Endothelial cell of umbilical vein (primary cell): ENCODE measurements at regions of chr5 and their contacts with region 1.

Region 1: DNA sequence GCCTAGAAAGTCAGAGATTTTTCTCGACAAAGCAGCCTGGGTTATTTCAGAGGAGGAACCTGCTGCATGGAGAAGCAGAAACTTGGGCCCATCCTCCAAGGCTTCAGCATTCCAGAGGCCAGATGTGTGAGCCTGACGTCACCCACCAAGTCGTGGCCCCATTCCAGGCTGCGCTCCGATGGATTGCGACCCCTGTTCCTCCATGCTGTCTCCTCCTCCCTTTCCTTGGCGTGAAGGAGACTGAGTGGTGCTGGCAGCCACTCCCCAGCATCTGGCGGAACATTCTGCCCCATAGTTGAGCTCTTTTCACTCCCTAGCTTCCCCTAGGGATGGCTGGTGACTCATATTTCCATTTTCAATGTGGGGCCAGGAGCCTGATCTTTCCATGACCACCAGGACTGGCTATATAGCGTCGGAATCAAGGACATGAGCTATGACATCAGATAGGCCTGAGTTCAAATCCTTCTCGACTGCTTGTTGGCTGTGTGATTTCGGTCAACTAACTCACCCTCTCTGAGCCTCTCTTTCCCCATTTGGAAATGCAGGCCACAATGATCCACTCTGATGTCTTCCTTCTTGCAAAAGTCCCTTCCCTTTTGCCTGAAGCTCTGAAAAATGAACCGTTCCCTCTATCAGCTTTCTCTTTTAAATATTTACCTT is 24.5 kb upstream of the DUSP1 start:
- DNase-seq: peak; percentile 96
- H3K4me3 ChIP-seq: no peak overlapping the region
- H3K27ac ChIP-seq: peak overlapping the region; percentile 76
- H3K4me1 ChIP-seq: peaks cover 48% of the 10 kb centered on the region
- H3K27me3 ChIP-seq: no peaks in the 10 kb centered on the region
- CTCF ChIP-seq: no peak
- POLR2A ChIP-seq: no peak

Region 2: DNA sequence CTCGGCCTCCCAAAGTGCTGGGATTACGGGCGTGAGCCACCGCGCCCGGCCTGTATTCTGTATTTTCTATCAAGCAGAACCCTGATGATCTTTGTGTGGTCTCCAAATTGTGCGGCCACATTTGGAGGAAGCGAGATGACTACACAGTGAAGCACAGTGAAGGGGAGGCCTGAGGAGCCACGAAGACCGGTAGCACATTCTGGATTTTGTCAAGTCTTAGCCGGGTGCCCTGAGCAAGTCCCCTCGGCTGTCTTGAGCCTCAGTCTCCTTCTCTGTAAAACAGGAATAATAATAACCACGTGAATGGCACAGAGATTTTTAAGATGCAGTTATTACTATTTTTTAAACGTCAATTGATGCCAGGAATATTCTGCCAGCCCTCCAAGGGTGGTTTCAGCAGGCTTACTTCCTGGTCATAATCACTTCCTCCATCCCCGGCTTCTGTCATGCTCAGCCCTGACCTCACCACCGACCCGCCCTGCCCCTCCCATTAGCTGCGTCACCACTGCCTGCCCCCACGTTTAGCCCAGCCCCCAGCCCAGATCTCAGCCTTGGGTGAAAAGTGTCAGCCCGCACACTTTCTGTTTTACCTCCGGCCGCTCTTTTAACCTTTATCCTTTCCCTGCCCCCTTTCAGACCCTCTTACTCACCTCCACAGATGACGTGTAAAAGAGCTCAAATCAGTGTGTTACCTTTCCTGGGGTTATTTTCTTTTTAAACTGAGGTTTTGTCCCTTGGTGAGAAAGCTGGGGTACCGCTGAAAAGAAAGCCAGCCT is 11.6 kb after region 1 on chr5:
- CTCF ChIA-PET with region 1: interaction called, 6 read pairs
- POLR2A ChIA-PET with region 1: no interaction called
- dilution Hi-C with region 1: no loop called
- intact Hi-C with region 1: loop called (anchors 1 kb)
- DNase-seq: peak; percentile 86
- H3K4me3 ChIP-seq: peak overlapping the region in 1 of 3 experiments; percentile 41
- H3K27ac ChIP-seq: peak overlapping the region; percentile 95
- H3K4me1 ChIP-seq: peaks cover 15% of the 10 kb centered on the region
- H3K27me3 ChIP-seq: no peaks in the 10 kb centered on the region
- CTCF ChIP-seq: no peak
- POLR2A ChIP-seq: peak; percentile 68